ENCODE measurements at regions of chrX and their contacts with region 1.

Region 1: GRCh38 chrX:119075270-119076025 is 2.7 kb downstream of the CT47C1 start:
- DNase-seq: no peak
- ATAC-seq: no peak
- H3K4me3 ChIP-seq: no peak overlapping the region
- H3K4me3 Mint-ChIP-seq: no peak overlapping the region
- H3K27ac ChIP-seq: no peak overlapping the region
- H3K27ac Mint-ChIP-seq: no peak overlapping the region
- H3K4me1 ChIP-seq: peaks cover 11 to 15% of the 10 kb centered on the region in 2 donors
- H3K4me1 Mint-ChIP-seq: peaks cover 14% of the 10 kb centered on the region
- H3K27me3 ChIP-seq: no peaks in the 10 kb centered on the region
- H3K27me3 Mint-ChIP-seq: peaks cover 15% of the 10 kb centered on the region
- CTCF ChIP-seq: no peak

Region 2: DNA sequence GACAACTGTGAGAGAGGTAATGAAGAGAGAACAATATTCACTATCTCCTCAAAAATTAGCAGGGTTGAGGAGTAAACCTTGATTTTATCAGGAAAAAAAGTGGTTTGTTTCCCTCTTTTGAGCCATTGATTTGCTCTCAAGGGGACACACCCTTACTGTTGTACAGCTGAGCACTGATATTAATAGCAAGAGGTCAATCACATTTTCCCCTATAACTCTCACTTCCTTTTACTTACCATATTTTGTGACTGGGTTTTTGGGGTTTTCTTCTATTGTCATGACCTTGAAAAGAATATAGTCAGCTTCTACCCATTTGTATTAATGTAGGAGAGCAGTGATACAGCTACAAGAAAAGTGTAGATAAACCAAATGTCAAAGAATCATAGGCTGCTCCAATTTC is 171.2 kb before region 1 on chrX:
- CTCF ChIA-PET with region 1: no interaction called
- POLR2A ChIA-PET with region 1: interaction called, 10 read pairs
- intact Hi-C with region 1: no loop called
- DNase-seq: peak; percentile 47
- ATAC-seq: peak; percentile 57
- H3K4me3 ChIP-seq: no peak overlapping the region
- H3K4me3 Mint-ChIP-seq: peak overlapping the region; percentile 56
- H3K27ac ChIP-seq: peak overlapping the region; percentile 5 to 39
- H3K27ac Mint-ChIP-seq: peak overlapping the region; percentile 68
- H3K4me1 ChIP-seq: peaks cover 25 to 35% of the 10 kb centered on the region in 2 donors
- H3K4me1 Mint-ChIP-seq: peaks cover 41% of the 10 kb centered on the region
- H3K27me3 ChIP-seq: no peaks in the 10 kb centered on the region
- H3K27me3 Mint-ChIP-seq: no peaks in the 10 kb centered on the region
- CTCF ChIP-seq: no peak

Region 3: DNA sequence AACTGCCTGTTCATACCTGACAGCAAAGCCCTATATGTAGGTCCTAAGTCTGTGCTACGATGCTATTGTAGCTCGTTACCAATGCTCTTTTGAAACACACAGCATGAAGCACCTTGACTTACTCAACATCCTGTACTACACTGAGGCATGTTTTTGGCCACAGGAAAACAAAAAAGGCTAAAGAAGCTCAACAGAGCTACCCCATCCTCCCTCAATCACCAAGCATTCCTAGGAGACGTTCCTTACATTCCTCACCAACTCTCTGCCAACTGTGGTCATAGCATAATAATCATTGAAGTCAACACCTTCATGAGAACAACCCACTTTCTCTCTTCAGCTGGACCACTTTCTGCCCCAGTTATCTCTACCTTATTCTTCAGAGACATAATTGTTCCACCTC is 250.0 kb after region 1 on chrX:
- CTCF ChIA-PET with region 1: no interaction called
- POLR2A ChIA-PET with region 1: no interaction called
- intact Hi-C with region 1: no loop called
- DNase-seq: no peak
- ATAC-seq: no peak
- H3K4me3 ChIP-seq: no peak overlapping the region
- H3K4me3 Mint-ChIP-seq: no peak overlapping the region
- H3K27ac ChIP-seq: no peak overlapping the region
- H3K27ac Mint-ChIP-seq: no peak overlapping the region
- H3K4me1 ChIP-seq: no peaks in the 10 kb centered on the region
- H3K4me1 Mint-ChIP-seq: no peaks in the 10 kb centered on the region
- H3K27me3 ChIP-seq: no peaks in the 10 kb centered on the region
- H3K27me3 Mint-ChIP-seq: peaks cover 6% of the 10 kb centered on the region
- CTCF ChIP-seq: no peak